Esophagus muscularis mucosa (tissue), 4 donors: ENCODE measurements at regions of chr5 and their contacts with region 1.

Region 1: GRCh38 chr5:39570403-39571027 is 145.7 kb upstream of the DAB2 start:
- DNase-seq: no peak
- H3K4me3 ChIP-seq: no peak overlapping the region
- H3K27ac ChIP-seq: no peak overlapping the region
- H3K4me1 ChIP-seq: peaks cover 0 to 4% (median 0%) of the 10 kb centered on the region in 4 donors
- H3K27me3 ChIP-seq: no peaks in the 10 kb centered on the region
- CTCF ChIP-seq: peak; percentile 68 to 79 (median 73)
- EP300 ChIP-seq: no peak
- POLR2A ChIP-seq: no peak

Region 2: DNA sequence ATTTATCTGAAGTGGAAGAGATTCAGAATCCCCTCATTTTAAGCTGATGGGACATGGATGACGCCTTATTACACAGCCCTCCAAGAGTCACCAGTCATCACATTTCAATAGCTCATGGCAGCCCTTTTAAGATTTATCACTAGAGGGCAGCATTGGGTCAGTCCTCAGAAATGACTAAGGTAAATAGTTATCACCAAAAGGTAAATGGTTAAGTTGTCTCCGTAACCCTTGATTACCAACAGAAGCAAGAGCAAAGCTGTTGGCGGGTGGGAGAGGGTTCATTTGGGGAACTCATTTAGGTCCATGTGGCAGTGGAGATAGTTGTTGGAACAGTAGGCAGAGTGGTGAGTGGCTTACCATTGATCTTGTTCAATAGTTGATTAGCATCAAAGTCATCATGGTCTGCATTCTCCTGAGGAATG is 194.2 kb before region 1 on chr5:
- intact Hi-C with region 1: loop called (anchors 5 kb)
- DNase-seq: no peak
- H3K4me3 ChIP-seq: no peak overlapping the region
- H3K27ac ChIP-seq: no peak overlapping the region
- H3K4me1 ChIP-seq: peaks cover 0 to 4% (median 0%) of the 10 kb centered on the region in 4 donors
- H3K27me3 ChIP-seq: no peaks in the 10 kb centered on the region
- CTCF ChIP-seq: peak; percentile 75 to 86 (median 76)
- EP300 ChIP-seq: no peak
- POLR2A ChIP-seq: no peak

Region 3: GRCh38 chr5:39394946-39395345 is 175.6 kb before region 1 on chr5:
- intact Hi-C with region 1: no loop called
- DNase-seq: no peak
- H3K4me3 ChIP-seq: no peak overlapping the region
- H3K27ac ChIP-seq: peak overlapping the region in 3 of 4 donors; percentile 5 to 30 (median 30)
- H3K4me1 ChIP-seq: peaks cover 12 to 60% (median 41%) of the 10 kb centered on the region in 4 donors
- H3K27me3 ChIP-seq: no peaks in the 10 kb centered on the region
- CTCF ChIP-seq: no peak
- EP300 ChIP-seq: no peak
- POLR2A ChIP-seq: no peak